Prostate gland (tissue), 2 donors: ENCODE measurements at regions of chr6 and their contacts with region 1.

Region 1: GRCh38 chr6:55868771-55869479 is 6.5 kb downstream of the BMP5 start:
- DNase-seq: peak; percentile 15
- H3K4me3 ChIP-seq: no peak overlapping the region
- H3K27ac ChIP-seq: no peak overlapping the region
- H3K4me1 ChIP-seq: no peaks in the 10 kb centered on the region
- H3K27me3 ChIP-seq: no peaks in the 10 kb centered on the region
- CTCF ChIP-seq: no peak
- POLR2A ChIP-seq: no peak

Region 2: DNA sequence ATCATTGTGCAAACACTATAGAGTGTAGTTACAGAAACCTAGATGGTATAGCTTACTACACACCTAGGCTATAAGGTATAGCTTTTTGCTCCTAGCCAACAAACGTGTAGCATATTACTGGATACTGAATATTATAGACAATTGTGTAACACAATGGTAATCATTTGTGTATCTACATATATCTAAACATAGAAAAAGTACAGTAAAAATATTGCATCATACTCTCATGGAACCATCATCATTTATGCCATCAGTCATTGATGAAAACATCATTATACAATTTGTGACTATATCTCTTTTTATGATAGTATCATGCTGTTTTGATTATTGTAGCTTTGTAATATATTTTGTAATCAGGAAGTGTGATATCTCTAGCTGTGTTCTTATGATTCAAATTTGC is 715.6 kb before region 1 on chr6:
- intact Hi-C with region 1: no loop called
- DNase-seq: no peak
- H3K4me3 ChIP-seq: no peak overlapping the region
- H3K27ac ChIP-seq: no peak overlapping the region
- H3K4me1 ChIP-seq: no peaks in the 10 kb centered on the region
- H3K27me3 ChIP-seq: no peaks in the 10 kb centered on the region
- CTCF ChIP-seq: no peak
- POLR2A ChIP-seq: no peak

Region 3: DNA sequence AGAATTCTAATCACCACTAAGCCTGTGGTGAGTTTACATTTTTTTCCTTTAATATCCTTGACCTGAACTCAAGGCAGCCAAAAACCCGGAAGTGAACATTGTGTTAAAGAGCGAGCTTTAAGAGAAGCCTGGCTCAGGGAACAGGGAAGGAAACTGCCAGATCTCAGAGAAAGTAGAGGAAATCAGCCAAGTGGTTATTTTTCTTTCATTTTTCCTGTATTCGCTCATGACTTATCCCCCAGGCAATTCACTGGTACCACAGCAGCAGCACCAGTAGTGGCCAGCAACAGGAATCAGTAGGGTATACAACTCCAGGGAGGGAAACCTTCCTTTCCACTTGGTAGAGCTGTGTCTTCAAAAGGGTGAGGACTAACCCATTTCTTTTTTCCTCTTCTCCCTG is 200.3 kb before region 1 on chr6:
- intact Hi-C with region 1: loop called (anchors 10 kb)
- DNase-seq: no peak
- H3K4me3 ChIP-seq: no peak overlapping the region
- H3K27ac ChIP-seq: peak overlapping the region in 1 of 2 donors; percentile 5
- H3K4me1 ChIP-seq: no peaks in the 10 kb centered on the region
- H3K27me3 ChIP-seq: no peaks in the 10 kb centered on the region
- CTCF ChIP-seq: no peak
- POLR2A ChIP-seq: no peak

Region 4: GRCh38 chr6:56131435-56131834 is 262.5 kb after region 1 on chr6:
- intact Hi-C with region 1: no loop called
- DNase-seq: no peak
- H3K4me3 ChIP-seq: no peak overlapping the region
- H3K27ac ChIP-seq: no peak overlapping the region
- H3K4me1 ChIP-seq: no peaks in the 10 kb centered on the region
- H3K27me3 ChIP-seq: no peaks in the 10 kb centered on the region
- CTCF ChIP-seq: no peak
- POLR2A ChIP-seq: no peak